RWPE1 (cell line): ENCODE measurements at regions of chr3 and their contacts with region 1.

Region 1: GRCh38 chr3:160312014-160312624 is 86.9 kb downstream of the C3orf80 start:
- DNase-seq: no peak
- H3K27ac ChIP-seq: no peak overlapping the region
- CTCF ChIP-seq: no peak

Region 2: GRCh38 chr3:158819282-158819681 is 1492.8 kb before region 1 on chr3:
- CTCF ChIA-PET with region 1: no interaction called
- POLR2A ChIA-PET with region 1: no interaction called
- DNase-seq: no peak
- H3K27ac ChIP-seq: no peak overlapping the region
- CTCF ChIP-seq: no peak

Region 3: GRCh38 chr3:160003520-160004128 is 308.5 kb before region 1 on chr3:
- CTCF ChIA-PET with region 1: no interaction called
- POLR2A ChIA-PET with region 1: no interaction called
- DNase-seq: peak; percentile 55
- H3K27ac ChIP-seq: no peak overlapping the region
- CTCF ChIP-seq: peak; percentile 60

Region 4: GRCh38 chr3:160355826-160356225 is 43.7 kb after region 1 on chr3:
- CTCF ChIA-PET with region 1: no interaction called
- POLR2A ChIA-PET with region 1: no interaction called
- DNase-seq: no peak
- H3K27ac ChIP-seq: no peak overlapping the region
- CTCF ChIP-seq: no peak

Region 5: DNA sequence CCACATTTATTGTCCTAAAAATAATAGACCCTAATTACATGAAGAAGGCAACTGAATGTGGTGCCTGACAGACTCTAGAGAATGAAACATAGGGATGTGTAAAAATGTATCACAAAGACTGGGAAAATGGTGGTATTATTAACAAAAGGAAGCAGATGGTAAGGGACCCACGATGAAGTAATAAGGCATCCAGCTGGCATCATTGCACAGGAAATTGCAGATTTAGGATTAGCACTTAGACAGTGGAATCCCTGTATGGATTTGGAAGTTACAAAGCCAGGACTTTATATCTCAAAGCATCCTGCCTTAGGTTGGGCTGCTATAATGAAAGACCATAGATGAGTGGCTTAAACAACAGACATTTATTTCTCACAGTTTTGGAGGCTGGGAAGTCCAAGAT is 548.2 kb after region 1 on chr3:
- CTCF ChIA-PET with region 1: interaction called, 11 read pairs
- POLR2A ChIA-PET with region 1: no interaction called
- DNase-seq: no peak
- H3K27ac ChIP-seq: no peak overlapping the region
- CTCF ChIP-seq: no peak